Colonic mucosa (tissue), 4 donors: ENCODE measurements at regions of chr11 and their contacts with region 1.

Region 1: GRCh38 chr11:73350908-73351636 is 25.1 kb upstream of the RELT start:
- DNase-seq: peak; percentile 35
- H3K4me3 ChIP-seq: no peak overlapping the region
- H3K27ac ChIP-seq: no peak overlapping the region
- H3K4me1 ChIP-seq: peaks cover 3% of the 10 kb centered on the region
- H3K27me3 ChIP-seq: no peaks in the 10 kb centered on the region
- CTCF ChIP-seq: peak; percentile 95

Region 2: GRCh38 chr11:73393479-73394380 is 42.7 kb after region 1 on chr11:
- intact Hi-C with region 1: loop called (anchors 2 kb)
- DNase-seq: peak; percentile 73
- H3K4me3 ChIP-seq: no peak overlapping the region
- H3K27ac ChIP-seq: no peak overlapping the region
- H3K4me1 ChIP-seq: no peaks in the 10 kb centered on the region
- H3K27me3 ChIP-seq: no peaks in the 10 kb centered on the region
- CTCF ChIP-seq: peak; percentile 65

Region 3: GRCh38 chr11:73693899-73694525 is 342.9 kb after region 1 on chr11:
- intact Hi-C with region 1: no loop called
- DNase-seq: no peak
- H3K4me3 ChIP-seq: no peak overlapping the region
- H3K27ac ChIP-seq: no peak overlapping the region
- H3K4me1 ChIP-seq: no peaks in the 10 kb centered on the region
- H3K27me3 ChIP-seq: no peaks in the 10 kb centered on the region
- CTCF ChIP-seq: no peak